ENCODE measurements at regions of chr19 and their contacts with region 1.

Region 1: DNA sequence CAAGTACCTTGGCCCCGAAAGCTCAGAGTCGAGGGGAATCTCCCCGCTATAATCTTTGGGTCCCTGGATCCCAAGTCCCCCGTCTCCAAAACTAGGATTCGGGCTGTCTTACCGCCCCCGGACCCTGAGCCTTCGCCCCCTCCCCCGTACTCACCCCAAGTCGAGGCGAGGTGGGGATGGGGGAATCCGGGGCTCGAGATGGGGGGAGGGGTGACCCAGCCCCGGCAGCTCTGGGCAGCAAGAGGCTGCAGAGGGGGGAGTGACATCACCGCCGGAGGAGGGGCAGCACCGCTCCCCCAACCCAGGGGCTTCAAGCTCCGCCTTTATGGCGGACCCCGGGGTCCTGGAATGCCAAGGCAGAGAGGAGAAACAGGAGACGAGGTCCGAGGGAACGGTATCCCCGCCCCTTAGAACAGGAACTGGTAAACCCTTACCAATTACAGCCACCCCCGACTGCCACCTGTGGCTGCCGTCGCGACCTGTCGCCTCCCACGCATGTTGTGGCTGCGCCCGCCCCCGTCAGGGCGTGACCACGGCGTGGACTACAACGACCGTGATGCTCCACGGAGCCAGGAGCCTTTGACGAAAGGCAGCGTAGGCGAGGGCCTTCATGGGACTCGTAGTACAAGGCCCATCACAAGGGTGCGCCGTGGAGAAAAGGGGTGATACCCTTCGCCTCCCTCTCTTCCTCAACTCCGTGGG is 4.0 kb upstream of the KCNC3 start:
- DNase-seq: peak; percentile 73 to 93 (median 86)
- ATAC-seq: peak; percentile 67 to 81 (median 74)
- H3K4me3 ChIP-seq: peak overlapping the region; percentile 52 to 53
- H3K4me3 Mint-ChIP-seq: peak overlapping the region; percentile 83 to 86 (median 84)
- H3K27ac ChIP-seq: peak overlapping the region; percentile 52
- H3K27ac Mint-ChIP-seq: peak overlapping the region; percentile 91 to 93
- H3K4me1 ChIP-seq: peaks cover 3 to 57% of the 10 kb centered on the region in 2 experiments
- H3K4me1 Mint-ChIP-seq: peaks cover 38 to 55% (median 46%) of the 10 kb centered on the region in 3 donors
- H3K27me3 ChIP-seq: peaks cover 0 to 77% of the 10 kb centered on the region in 2 experiments
- H3K27me3 Mint-ChIP-seq: peaks cover 49 to 59% of the 10 kb centered on the region in 2 donors

Region 2: DNA sequence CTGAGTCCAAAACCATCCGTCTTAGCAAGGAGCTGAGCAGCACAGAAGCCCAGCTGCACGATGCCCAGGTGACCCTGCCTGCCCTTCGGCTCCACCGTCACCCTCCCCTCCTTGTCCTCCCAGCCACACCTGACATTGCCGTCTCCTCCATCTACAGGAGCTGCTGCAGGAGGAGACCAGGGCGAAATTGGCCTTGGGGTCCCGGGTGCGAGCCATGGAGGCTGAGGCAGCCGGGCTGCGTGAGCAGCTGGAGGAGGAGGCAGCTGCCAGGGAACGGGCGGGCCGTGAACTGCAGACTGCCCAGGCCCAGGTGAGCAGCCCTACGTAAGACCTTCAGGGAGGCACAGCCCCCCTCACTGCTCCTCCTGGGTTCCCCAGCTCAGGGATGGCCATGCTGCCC is 53.1 kb before region 1 on chr19:
- CTCF ChIA-PET with region 1: no interaction called
- POLR2A ChIA-PET with region 1: interaction called, 4 to 10 read pairs
- DNase-seq: no peak
- ATAC-seq: no peak
- H3K4me3 ChIP-seq: no peak overlapping the region
- H3K4me3 Mint-ChIP-seq: no peak overlapping the region
- H3K27ac ChIP-seq: no peak overlapping the region
- H3K27ac Mint-ChIP-seq: no peak overlapping the region
- H3K4me1 ChIP-seq: no peaks in the 10 kb centered on the region
- H3K4me1 Mint-ChIP-seq: no peaks in the 10 kb centered on the region
- H3K27me3 ChIP-seq: peaks cover 0 to 22% of the 10 kb centered on the region in 2 experiments
- H3K27me3 Mint-ChIP-seq: peaks cover 7 to 27% of the 10 kb centered on the region in 2 donors

Region 3: DNA sequence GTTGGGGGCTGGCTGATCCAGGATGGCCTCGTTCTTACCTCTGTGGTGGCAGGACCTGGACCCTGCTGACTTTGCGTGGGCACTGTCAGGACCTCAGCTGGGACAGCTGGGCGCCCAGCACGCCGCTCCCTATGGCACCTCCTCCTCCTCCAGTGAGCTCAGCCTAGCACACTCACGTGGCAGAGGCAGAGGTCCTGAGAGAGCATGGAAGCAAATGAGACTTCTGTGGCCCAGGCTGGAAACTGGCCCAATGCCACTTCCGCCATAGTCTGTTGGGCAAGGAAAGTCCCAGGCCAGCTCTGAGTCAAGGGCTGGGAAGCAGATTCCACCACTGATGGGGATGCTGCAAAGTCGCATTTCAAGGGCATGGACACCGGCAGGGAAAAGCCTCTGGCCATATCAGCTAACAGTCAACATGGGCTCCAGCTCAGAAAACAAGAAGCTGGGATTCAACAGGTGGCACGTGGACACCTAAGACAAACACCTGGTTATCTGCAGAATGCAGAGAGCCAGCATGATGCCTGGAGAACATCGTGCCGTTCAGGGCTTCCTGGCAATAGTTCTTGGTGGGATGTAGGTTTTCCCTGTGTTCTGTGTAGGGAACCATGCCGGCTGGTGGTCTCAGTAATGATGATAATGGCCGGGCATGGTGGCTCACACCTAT is 116.2 kb after region 1 on chr19:
- CTCF ChIA-PET with region 1: no interaction called
- POLR2A ChIA-PET with region 1: no interaction called
- DNase-seq: no peak
- ATAC-seq: no peak
- H3K4me3 ChIP-seq: no peak overlapping the region
- H3K4me3 Mint-ChIP-seq: no peak overlapping the region
- H3K27ac ChIP-seq: no peak overlapping the region
- H3K27ac Mint-ChIP-seq: no peak overlapping the region
- H3K4me1 ChIP-seq: no peaks in the 10 kb centered on the region
- H3K4me1 Mint-ChIP-seq: peaks cover 0 to 4% (median 0%) of the 10 kb centered on the region in 3 donors
- H3K27me3 ChIP-seq: peaks cover 0 to 29% of the 10 kb centered on the region in 2 experiments
- H3K27me3 Mint-ChIP-seq: peaks cover 8 to 22% of the 10 kb centered on the region in 2 donors